ENCODE measurements at regions of chr7 and their contacts with region 1.

Region 1: DNA sequence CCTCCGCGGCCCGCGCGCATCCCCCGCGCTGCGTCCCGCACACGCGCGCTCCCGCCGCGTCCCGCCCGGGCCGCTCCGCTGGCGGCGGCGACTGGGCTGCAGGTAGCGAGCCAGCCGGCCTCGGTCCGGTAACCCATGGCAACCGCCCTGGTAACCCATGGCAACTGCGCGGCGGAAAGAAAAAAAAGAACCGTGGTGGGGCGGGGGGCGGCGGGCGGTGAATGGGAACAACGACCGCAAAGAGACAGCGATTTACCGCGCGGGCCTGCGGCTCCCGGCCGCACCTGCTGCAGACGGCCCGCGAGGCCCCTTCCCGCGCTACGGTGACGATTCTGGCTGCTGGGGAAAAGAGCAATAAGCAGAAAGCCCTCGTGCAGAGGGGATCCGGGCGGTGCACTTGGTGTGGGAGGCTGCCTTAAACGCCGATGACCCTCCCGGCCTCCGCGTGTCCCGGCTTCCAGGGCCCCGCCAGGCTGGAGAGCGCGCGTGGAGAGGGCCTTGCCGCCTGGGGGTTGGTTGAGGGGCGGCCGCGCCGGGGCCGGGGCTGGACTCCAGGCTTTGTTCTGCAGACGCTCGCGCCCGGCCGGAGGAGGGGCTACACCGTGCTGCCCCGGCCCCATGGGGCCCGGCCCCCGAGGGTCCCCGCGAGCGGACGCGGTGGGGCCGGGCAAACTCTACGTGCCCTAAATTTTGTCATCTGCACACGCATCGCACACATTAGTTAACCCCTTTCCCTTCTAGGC is 84.7 kb downstream of the SNX10 start:
- DNase-seq: peak; percentile 74
- H3K4me3 ChIP-seq: peak overlapping the region; percentile 70 to 91 (median 76)
- H3K27ac ChIP-seq: peak overlapping the region; percentile 80
- H3K4me1 ChIP-seq: peaks cover 36% of the 10 kb centered on the region
- H3K27me3 ChIP-seq: no peaks in the 10 kb centered on the region
- CTCF ChIP-seq: no peak
- POLR2A ChIP-seq: peak; percentile 51

Region 2: DNA sequence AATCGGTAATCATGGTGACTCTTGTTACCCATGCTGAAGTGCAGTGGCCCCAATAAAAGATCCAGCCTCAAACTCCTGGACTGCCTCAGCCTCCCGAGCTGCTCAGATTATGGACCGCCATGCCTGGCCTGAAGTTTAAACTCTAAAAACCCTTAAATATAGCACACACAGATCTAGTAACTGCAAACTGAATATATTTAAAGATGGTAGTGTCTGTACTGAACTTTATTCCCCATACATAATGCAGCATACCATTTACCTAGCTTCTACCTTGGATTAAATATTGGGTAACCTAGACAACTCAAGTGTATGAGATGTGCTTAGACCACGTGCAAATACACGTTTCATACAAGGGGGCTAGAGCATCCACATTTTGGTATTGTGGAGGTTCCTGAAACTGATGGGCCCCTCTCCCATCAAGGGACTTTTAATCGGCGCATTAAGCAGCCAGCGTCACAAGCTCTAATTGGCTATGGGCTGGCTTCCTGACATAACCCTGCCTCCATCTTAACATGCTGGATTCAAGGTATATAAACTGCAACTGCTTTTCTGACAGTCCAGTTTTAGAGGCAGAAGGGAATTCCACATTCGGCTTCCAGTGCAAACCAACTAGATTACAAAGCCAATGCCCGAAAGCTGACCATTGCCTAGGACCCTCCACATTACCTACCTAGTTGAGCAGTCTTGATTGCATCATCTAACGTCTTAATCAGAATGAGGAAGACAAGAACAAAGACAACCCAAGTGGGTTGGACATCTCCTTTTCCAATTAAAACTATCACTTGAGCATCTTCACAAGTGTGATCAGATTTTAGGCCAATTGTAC is 188.8 kb before region 1 on chr7:
- CTCF ChIA-PET with region 1: no interaction called
- POLR2A ChIA-PET with region 1: no interaction called
- dilution Hi-C with region 1: no loop called
- intact Hi-C with region 1: no loop called
- DNase-seq: no peak
- H3K4me3 ChIP-seq: no peak overlapping the region
- H3K27ac ChIP-seq: no peak overlapping the region
- H3K4me1 ChIP-seq: peaks cover 4% of the 10 kb centered on the region
- H3K27me3 ChIP-seq: no peaks in the 10 kb centered on the region
- CTCF ChIP-seq: no peak
- POLR2A ChIP-seq: peak; percentile 70

Region 3: GRCh38 chr7:26200444-26201246 is 175.7 kb before region 1 on chr7 and contains the start of gene HNRNPA2B1:
- CTCF ChIA-PET with region 1: interaction called, 3 read pairs
- POLR2A ChIA-PET with region 1: no interaction called
- dilution Hi-C with region 1: no loop called
- intact Hi-C with region 1: loop called (anchors 2 kb)
- DNase-seq: peak; percentile 99
- H3K4me3 ChIP-seq: peak within 1 kb of the TSS; percentile 98 to 100 (median 98)
- H3K27ac ChIP-seq: peak within 1 kb of the TSS; percentile 97
- H3K4me1 ChIP-seq: peaks cover 40% of the 10 kb centered on the region
- H3K27me3 ChIP-seq: no peaks in the 10 kb centered on the region
- CTCF ChIP-seq: no peak
- POLR2A ChIP-seq: peak; percentile 100
- total RNA-seq, gene HNRNPA2B1: 703 and 717 TPM in 2 replicates

Region 4: GRCh38 chr7:26417911-26418413 is 41.6 kb after region 1 on chr7:
- CTCF ChIA-PET with region 1: no interaction called
- POLR2A ChIA-PET with region 1: no interaction called
- dilution Hi-C with region 1: no loop called
- intact Hi-C with region 1: loop called (anchors 1 kb)
- DNase-seq: peak; percentile 98
- H3K4me3 ChIP-seq: peak overlapping the region in 1 of 3 experiments; percentile 30
- H3K27ac ChIP-seq: peak overlapping the region; percentile 99
- H3K4me1 ChIP-seq: peaks cover 23% of the 10 kb centered on the region
- H3K27me3 ChIP-seq: no peaks in the 10 kb centered on the region
- CTCF ChIP-seq: no peak
- POLR2A ChIP-seq: no peak

Region 5: GRCh38 chr7:26449175-26450165 is 73.1 kb after region 1 on chr7:
- CTCF ChIA-PET with region 1: interaction called, 6 read pairs
- POLR2A ChIA-PET with region 1: no interaction called
- dilution Hi-C with region 1: no loop called
- intact Hi-C with region 1: loop called (anchors 1 kb)
- DNase-seq: peak; percentile 96
- H3K4me3 ChIP-seq: no peak overlapping the region
- H3K27ac ChIP-seq: peak overlapping the region; percentile 80
- H3K4me1 ChIP-seq: peaks cover 37% of the 10 kb centered on the region
- H3K27me3 ChIP-seq: no peaks in the 10 kb centered on the region
- CTCF ChIP-seq: no peak
- POLR2A ChIP-seq: peak; percentile 54

Region 6: GRCh38 chr7:26500749-26501352 is 124.5 kb after region 1 on chr7:
- CTCF ChIA-PET with region 1: interaction called, 60 read pairs
- POLR2A ChIA-PET with region 1: no interaction called
- dilution Hi-C with region 1: no loop called
- intact Hi-C with region 1: loop called (anchors 1 kb)
- DNase-seq: peak; percentile 52
- H3K4me3 ChIP-seq: no peak overlapping the region
- H3K27ac ChIP-seq: no peak overlapping the region
- H3K4me1 ChIP-seq: no peaks in the 10 kb centered on the region
- H3K27me3 ChIP-seq: peaks cover 2 to 3% of the 10 kb centered on the region in 2 experiments
- CTCF ChIP-seq: peak; percentile 25 to 29
- POLR2A ChIP-seq: no peak

Region 7: DNA sequence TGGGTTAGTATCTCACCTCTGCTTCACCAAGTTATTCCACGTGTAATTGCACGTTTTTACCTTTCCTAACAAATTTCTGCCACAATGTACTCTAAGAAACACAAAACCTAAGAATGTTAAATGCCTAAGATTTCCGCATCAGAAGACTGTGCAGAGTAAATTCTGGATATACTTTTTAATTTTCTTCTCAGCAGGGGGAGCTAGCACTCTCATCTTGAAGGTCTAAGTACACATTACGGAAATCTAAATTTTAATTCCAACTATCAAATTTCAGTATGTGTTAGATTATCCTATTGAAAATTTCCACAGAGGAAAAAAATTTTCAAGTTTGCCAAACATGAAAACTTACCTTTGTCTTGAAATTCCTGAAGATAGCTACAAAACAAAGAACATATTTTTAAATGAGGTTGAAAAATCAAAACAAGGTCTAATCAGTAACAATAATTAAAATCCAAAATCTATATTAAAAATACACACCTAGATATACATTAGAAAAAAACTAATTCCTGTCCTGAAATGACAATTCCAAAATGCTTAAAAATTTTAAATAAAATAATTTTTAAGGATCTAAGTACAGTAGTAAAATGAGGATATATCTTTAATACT is 477.5 kb after region 1 on chr7:
- CTCF ChIA-PET with region 1: no interaction called
- POLR2A ChIA-PET with region 1: no interaction called
- dilution Hi-C with region 1: loop called (anchors 10 kb)
- intact Hi-C with region 1: loop called (anchors 2 kb)
- DNase-seq: peak; percentile 69
- H3K4me3 ChIP-seq: no peak overlapping the region
- H3K27ac ChIP-seq: no peak overlapping the region
- H3K4me1 ChIP-seq: peaks cover 34% of the 10 kb centered on the region
- H3K27me3 ChIP-seq: no peaks in the 10 kb centered on the region
- CTCF ChIP-seq: peak; percentile 24 to 26
- POLR2A ChIP-seq: no peak

Measured in endothelial cell of umbilical vein (primary cell).